A549 (cell line): ENCODE measurements at regions of chr15 and their contacts with region 1.

Region 1: DNA sequence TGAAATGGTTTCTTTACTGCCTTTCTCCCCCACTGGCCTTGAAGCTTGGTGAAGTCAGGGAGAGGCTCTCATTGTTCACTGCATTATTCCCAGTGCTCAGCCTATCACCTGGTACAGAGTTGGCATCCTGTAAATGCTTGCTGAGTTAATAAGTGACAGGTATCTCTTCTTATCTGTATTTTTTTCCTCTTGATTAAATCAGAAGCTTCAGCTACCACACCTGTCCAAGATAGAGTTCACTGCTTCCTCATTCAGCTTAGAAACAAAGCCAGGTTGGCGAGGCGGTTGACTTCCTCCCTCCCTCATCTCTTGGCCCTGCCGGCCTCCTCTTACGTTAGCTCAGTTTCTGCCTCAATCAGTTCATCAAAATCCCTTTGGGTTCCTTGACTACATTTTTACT is 142.8 kb downstream of the LIPC start:
- DNase-seq: peak; percentile 43 to 70
- ATAC-seq: peak; percentile 45 to 79; a peak in 4 of 6 replicates
- H3K4me3 ChIP-seq: no peak overlapping the region
- H3K27ac ChIP-seq: peak overlapping the region in 1 of 2 experiments; percentile 66; a peak in 4 of 6 replicates
- H3K4me1 ChIP-seq: peaks cover 17% of the 10 kb centered on the region
- CTCF ChIP-seq: no peak
- EP300 ChIP-seq: no peak
- POLR2A ChIP-seq: no peak
- RAD21 ChIP-seq: no peak

Region 2: GRCh38 chr15:58585693-58586443 is 11.2 kb after region 1 on chr15:
- CTCF ChIA-PET with region 1: interaction called, 17 read pairs
- POLR2A ChIA-PET with region 1: no interaction called
- DNase-seq: no peak
- ATAC-seq: peak in 1 of 2 experiments; percentile 32; a peak in 3 of 6 replicates
- H3K4me3 ChIP-seq: no peak overlapping the region
- H3K27ac ChIP-seq: no peak overlapping the region
- H3K4me1 ChIP-seq: peaks cover 15% of the 10 kb centered on the region; the same call in 1 of the 3 replicates
- CTCF ChIP-seq: no peak
- EP300 ChIP-seq: no peak
- POLR2A ChIP-seq: no peak
- RAD21 ChIP-seq: no peak